ENCODE measurements at regions of chr4 and their contacts with region 1.

Region 1: DNA sequence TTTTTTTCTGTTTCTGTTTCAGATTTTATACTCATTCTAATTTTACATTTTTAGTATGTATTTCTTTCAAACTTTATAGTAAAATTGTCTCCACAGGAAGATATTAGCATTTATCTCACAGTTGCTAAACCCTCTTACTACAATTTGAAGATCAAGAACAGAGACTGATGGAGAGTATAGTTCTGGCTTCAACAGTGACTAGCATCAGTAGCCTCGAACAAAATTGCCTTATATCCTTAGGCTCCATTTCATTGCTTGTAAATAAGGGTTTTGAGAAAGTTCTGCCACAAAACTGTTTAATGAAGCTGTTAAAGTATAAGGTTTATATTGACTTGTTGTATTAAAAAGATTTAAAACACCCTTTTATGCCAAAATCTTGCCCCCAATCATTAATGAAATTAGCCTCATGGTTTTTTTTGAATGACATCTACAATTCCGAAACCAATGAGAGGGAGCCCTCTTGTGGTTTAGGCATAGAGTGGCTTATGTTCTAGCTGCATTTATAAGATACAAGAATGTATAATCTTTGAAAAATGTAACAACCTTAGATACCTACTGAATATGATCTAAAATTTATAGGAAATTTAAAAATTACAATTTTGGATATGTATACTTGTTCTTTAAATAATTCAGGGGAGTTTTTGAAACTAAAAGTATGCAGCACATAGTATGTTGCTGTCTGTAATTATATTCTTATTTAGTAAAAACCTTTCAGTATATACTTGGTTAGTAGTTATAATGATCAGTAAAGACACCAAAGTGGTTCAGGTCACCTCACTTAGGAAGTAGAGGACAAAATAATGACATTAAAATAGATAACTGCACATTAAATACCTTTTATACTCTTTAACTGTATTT is 109.8 kb upstream of the HPGD start:
- DNase-seq: no peak
- ATAC-seq: peak in 3 of 4 donors; percentile 75 to 87 (median 77)
- H3K4me3 ChIP-seq: no peak overlapping the region
- H3K27ac ChIP-seq: no peak overlapping the region
- H3K4me1 ChIP-seq: peaks cover 0 to under 1% (median under 1%) of the 10 kb centered on the region in 3 donors
- H3K27me3 ChIP-seq: no peaks in the 10 kb centered on the region
- CTCF ChIP-seq: peak in 3 of 4 donors; percentile 45 to 63 (median 58)

Region 2: GRCh38 chr4:174260099-174260498 is 372.0 kb before region 1 on chr4:
- intact Hi-C with region 1: no loop called
- DNase-seq: no peak
- ATAC-seq: peak in 3 of 4 donors; percentile 46 to 66 (median 60)
- H3K4me3 ChIP-seq: no peak overlapping the region
- H3K27ac ChIP-seq: no peak overlapping the region
- H3K4me1 ChIP-seq: peaks cover 0 to 4% (median 4%) of the 10 kb centered on the region in 3 donors
- H3K27me3 ChIP-seq: no peaks in the 10 kb centered on the region
- CTCF ChIP-seq: no peak

Region 3: DNA sequence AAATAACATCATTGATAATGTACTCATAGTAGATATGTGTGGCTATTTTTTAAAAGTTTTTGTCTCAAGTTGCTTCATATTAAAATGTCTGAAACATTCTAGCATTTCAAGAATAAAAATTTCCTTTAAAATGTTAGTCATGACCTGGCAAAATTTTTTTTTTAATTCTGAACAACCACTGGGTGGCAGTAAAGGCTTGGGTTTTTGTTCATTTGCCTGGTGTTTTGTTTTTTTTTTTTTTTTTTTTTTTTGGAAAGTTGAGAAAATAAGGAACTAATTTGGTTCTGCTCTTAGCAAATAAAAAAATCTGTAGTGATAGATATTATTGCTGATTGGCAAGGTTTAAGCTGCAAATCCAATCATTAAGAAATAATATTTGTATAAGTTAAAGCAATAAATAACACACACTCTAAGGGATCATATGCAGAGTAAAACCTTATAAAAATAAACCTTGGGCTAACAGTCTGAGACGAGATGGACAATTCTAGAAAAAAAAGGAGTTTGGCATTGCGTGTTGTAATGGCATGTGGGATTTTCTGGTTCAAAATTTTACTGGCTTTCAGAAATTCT is 267.0 kb before region 1 on chr4:
- intact Hi-C with region 1: loop called in 2 of 3 experiments (anchors 5 kb)
- DNase-seq: peak in 1 of 6 donors; percentile 5
- ATAC-seq: peak in 3 of 4 donors; percentile 55 to 61 (median 57)
- H3K4me3 ChIP-seq: no peak overlapping the region
- H3K27ac ChIP-seq: no peak overlapping the region
- H3K4me1 ChIP-seq: no peaks in the 10 kb centered on the region
- H3K27me3 ChIP-seq: no peaks in the 10 kb centered on the region
- CTCF ChIP-seq: peak in 2 of 4 donors; percentile 32 to 41

Region 4: DNA sequence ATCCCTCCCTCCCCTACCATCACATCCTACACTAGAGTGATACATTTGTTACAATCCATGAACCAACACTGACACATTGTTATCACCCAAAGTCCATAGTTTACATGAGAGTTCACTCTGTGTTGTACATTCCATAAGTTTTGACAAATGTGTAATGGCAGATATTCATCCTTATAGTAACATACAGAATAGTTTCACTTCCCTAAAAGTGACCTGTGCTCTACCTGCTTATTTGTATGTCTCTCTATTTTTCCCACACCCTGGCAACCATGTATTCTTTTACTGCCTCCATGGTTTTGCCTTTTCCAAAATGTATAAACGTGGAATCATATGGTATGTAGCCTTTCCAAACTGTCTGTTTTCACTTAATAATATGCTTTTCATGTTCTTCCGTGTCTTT is 67.6 kb before region 1 on chr4:
- intact Hi-C with region 1: no loop called
- DNase-seq: no peak
- ATAC-seq: no peak
- H3K4me3 ChIP-seq: no peak overlapping the region
- H3K27ac ChIP-seq: no peak overlapping the region
- H3K4me1 ChIP-seq: no peaks in the 10 kb centered on the region
- H3K27me3 ChIP-seq: no peaks in the 10 kb centered on the region
- CTCF ChIP-seq: no peak

Region 5: DNA sequence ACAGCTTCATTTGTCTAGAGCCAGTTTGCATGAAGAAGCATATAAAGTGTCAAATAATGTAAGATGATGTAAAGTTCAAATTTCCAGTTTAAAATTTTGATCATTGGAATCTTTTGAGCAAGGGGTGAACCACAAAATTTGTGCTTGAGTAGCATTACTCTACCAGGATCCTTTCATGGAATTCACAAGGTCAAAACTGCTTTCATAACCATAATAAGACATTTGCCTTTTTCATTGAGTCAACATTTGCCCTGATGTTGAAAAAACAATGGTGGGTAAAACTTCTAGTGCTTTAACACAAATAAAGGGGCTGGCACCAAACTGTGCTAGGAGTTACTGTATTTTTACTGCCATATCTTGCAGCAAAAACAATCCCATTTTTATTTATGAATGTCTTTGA is 54.7 kb after region 1 on chr4:
- intact Hi-C with region 1: no loop called
- DNase-seq: no peak
- ATAC-seq: no peak
- H3K4me3 ChIP-seq: no peak overlapping the region
- H3K27ac ChIP-seq: no peak overlapping the region
- H3K4me1 ChIP-seq: no peaks in the 10 kb centered on the region
- H3K27me3 ChIP-seq: no peaks in the 10 kb centered on the region
- CTCF ChIP-seq: no peak